ENCODE measurements at regions of chr3 and their contacts with region 1.

Region 1: GRCh38 chr3:4978204-4978965 is 852 bp upstream of the BHLHE40 start:
- DNase-seq: peak; percentile 97
- H3K4me3 ChIP-seq: peak overlapping the region; percentile 39
- H3K27ac ChIP-seq: peak overlapping the region; percentile 95
- H3K4me1 ChIP-seq: peaks cover 6% of the 10 kb centered on the region
- H3K27me3 ChIP-seq: no peaks in the 10 kb centered on the region
- CTCF ChIP-seq: no peak

Region 2: GRCh38 chr3:4722103-4722502 is 256.3 kb before region 1 on chr3:
- intact Hi-C with region 1: loop called (anchors 5 kb)
- DNase-seq: peak; percentile 62
- H3K4me3 ChIP-seq: no peak overlapping the region
- H3K27ac ChIP-seq: no peak overlapping the region
- H3K4me1 ChIP-seq: peaks cover 7% of the 10 kb centered on the region
- H3K27me3 ChIP-seq: no peaks in the 10 kb centered on the region
- CTCF ChIP-seq: peak; percentile 44

Region 3: DNA sequence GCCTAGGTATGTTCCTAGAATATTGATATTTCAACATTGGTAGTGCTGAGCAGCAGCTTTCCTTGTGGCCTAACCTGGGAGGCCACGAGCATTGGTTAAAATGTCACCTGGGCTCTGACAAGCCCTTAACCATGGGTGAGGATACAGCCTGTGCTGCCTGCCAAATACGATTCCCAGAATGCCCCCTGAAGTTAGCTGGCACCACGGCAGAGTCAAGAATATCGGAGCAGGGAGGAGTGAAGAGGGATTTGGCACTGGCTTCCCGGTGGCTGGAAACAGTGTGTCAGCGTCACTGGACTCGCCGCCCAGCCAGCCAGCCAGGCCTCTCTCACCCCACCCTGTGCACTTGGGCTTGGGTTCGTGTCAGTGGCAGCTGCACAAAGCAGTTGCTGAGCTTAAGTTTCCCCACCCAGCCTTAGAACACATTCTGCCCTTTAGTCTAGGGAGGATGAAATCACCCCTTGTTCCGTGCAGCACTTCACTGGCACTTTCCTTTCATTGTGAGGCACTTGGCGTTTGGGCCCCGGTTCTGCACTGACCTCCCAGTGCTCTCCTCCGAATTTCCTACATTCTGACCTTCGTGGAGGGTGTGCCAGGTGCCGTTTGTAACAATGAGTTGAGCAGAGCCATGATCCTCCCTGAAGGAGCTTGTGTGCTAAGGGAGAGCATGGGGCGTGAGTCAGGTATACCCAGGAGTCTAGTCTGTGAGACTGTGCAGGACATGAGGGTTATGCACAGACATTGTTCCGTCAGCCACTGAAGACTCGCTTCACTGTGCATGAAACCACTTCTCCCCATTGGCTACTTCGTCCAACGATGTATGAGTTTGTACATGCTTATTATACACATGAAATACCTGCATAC is 151.9 kb before region 1 on chr3:
- intact Hi-C with region 1: loop called (anchors 5 kb)
- DNase-seq: peak; percentile 85
- H3K4me3 ChIP-seq: no peak overlapping the region
- H3K27ac ChIP-seq: peak overlapping the region; percentile 85
- H3K4me1 ChIP-seq: peaks cover 28% of the 10 kb centered on the region
- H3K27me3 ChIP-seq: no peaks in the 10 kb centered on the region
- CTCF ChIP-seq: no peak

Region 4: GRCh38 chr3:5026331-5027218 is 48.2 kb after region 1 on chr3:
- intact Hi-C with region 1: loop called (anchors 5 kb)
- DNase-seq: peak; percentile 90
- H3K4me3 ChIP-seq: peak overlapping the region; percentile 41
- H3K27ac ChIP-seq: peak overlapping the region; percentile 18
- H3K4me1 ChIP-seq: no peaks in the 10 kb centered on the region
- H3K27me3 ChIP-seq: no peaks in the 10 kb centered on the region
- CTCF ChIP-seq: peak; percentile 37